ENCODE measurements at regions of chr20 and their contacts with region 1.

Region 1: GRCh38 chr20:46583411-46584214 is 33.2 kb upstream of the OCSTAMP start:
- DNase-seq: no peak
- ATAC-seq: no peak
- H3K4me3 ChIP-seq: no peak overlapping the region
- H3K27ac ChIP-seq: no peak overlapping the region
- H3K4me1 ChIP-seq: no peaks in the 10 kb centered on the region
- H3K27me3 ChIP-seq: no peaks in the 10 kb centered on the region
- CTCF ChIP-seq: no peak
- POLR2A ChIP-seq: no peak
- RAD21 ChIP-seq: no peak

Region 2: DNA sequence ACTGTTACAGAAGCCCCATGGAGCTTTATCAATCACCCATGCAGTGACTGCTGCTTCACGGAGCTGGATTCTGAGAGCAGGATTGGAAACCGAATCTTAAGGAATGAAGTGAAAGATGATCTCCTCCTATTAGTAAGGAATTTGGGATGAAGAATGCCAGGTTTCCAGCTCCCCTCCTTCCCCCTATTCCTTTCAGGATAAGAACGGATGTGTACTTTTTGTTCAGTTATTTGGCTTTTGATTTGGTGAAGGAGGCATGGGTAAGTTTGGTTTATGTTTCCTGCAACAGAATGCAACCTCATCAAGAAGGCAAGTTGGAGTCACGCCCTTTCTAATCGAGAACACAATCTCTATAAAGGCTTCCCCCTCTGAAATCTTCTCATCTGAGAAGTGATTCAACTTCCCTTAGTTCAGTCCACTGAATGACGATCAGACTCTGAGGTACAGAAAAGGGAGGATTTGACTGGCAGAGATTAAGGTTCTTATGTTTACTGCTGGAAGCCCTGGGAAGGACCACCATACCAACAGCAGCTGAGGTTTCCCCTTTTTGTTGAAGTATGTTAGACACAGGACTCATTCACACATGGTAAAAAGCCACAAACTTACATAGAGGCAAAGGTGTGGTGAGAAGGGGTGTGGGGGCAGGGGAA is 182.7 kb before region 1 on chr20:
- CTCF ChIA-PET with region 1: no interaction called
- POLR2A ChIA-PET with region 1: no interaction called
- RAD21 ChIA-PET with region 1: no interaction called
- intact Hi-C with region 1: no loop called
- DNase-seq: no peak
- ATAC-seq: no peak
- H3K4me3 ChIP-seq: no peak overlapping the region
- H3K27ac ChIP-seq: no peak overlapping the region
- H3K4me1 ChIP-seq: peaks cover 3 to 6% of the 10 kb centered on the region in 2 experiments; a peak in 3 of 4 replicates
- H3K27me3 ChIP-seq: no peaks in the 10 kb centered on the region
- CTCF ChIP-seq: no peak
- POLR2A ChIP-seq: no peak
- RAD21 ChIP-seq: no peak

Region 3: DNA sequence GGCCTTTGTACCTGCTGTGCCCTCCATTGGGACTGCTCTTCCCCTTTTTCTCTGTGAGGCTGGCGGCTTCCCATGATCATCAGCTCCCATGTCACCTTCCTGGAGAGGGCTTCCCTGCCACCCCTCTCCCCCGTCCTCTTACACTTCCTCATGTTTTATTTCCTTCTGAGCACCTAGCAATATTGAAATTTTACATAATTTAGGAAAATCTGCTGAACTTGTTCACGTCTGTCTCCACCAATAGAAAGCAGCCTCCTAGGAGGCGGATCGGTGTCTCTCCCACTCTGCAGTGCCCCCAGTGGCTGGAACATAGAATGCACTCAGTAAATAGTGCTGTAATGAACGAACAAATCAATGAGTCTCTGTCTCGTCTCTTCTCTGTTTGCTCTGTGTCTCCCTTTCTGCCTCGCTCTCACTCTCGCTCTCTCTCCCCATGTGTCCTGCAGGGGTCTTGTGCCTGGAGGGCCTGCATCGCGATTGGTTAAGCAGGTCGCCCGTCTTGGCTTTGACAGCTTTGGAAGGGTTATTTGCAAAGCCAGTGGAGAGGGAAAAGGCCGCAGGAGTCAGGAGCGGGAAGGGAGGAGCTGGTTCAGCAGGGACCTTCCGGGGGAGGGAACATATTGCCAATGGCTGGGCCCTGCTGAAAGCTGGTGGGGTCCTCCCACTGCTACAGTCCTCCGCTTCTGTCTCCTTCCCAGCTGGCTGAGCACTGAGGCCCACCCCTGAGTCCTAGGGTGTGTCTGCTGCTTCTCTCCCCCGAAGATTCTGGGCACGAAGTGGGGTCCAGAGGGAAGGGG is 21.0 kb before region 1 on chr20:
- CTCF ChIA-PET with region 1: interaction called, 12 read pairs
- POLR2A ChIA-PET with region 1: no interaction called
- RAD21 ChIA-PET with region 1: no interaction called
- intact Hi-C with region 1: no loop called
- DNase-seq: peak; percentile 47
- ATAC-seq: peak; percentile 93
- H3K4me3 ChIP-seq: peak overlapping the region; percentile 30 to 51
- H3K27ac ChIP-seq: no peak overlapping the region
- H3K4me1 ChIP-seq: peaks cover 4 to 14% of the 10 kb centered on the region in 2 experiments; a peak in 2 of 4 replicates
- H3K27me3 ChIP-seq: no peaks in the 10 kb centered on the region
- CTCF ChIP-seq: peak; percentile 33 to 95 (median 86); a peak in 4 of 6 replicates
- POLR2A ChIP-seq: no peak
- RAD21 ChIP-seq: no peak; the same call in 1 of the 2 replicates

Region 4: DNA sequence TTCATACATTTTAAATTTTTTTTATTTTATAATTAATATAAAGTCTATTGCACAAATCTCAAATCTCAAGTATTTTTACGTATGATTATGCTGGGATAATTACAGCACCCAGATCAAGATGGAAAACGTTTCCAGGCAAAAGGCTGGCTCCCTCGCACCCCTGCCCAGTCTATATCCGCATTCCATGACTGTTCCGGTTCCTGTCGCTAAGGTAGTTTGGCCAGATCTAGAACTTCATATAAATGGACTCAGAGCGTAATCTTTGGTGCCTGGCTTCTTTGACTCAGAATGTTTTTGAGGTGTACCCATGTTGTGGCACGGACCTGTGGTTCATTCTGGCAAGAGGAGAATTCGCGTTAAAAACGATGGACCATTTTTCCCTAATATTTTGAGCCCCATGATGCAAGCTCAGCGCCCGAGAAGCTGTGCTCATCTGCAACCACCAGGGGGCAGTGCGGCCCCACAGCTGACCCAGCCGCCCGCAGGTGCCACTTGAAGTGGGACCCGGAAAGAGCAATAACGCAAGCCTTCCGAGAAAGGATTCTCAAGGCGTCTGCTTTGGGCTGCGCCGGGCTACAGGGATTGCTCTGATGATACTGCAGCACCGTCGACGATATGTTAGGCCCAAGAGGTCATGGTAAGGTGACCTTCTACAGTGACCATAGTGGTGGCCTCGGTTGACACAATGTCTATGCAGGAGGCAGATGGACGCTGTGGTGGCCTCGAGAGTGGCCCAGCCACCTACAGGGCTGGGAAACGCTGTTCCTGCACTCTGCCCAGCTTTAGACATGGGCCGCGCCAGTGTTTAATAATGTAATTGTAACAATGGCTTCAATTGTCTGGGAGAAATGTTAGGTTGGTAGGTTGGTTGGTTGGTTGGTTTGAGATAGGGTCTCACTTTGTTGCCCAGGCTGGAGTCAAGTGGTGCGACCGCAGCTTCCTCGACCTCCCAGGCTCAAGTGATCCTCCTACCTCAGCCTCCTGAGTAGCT is 612.8 kb after region 1 on chr20:
- CTCF ChIA-PET with region 1: no interaction called
- POLR2A ChIA-PET with region 1: no interaction called
- RAD21 ChIA-PET with region 1: no interaction called
- intact Hi-C with region 1: no loop called
- DNase-seq: peak; percentile 62
- ATAC-seq: peak; percentile 75
- H3K4me3 ChIP-seq: no peak overlapping the region
- H3K27ac ChIP-seq: no peak overlapping the region
- H3K4me1 ChIP-seq: peaks cover 16 to 45% of the 10 kb centered on the region in 2 experiments
- H3K27me3 ChIP-seq: no peaks in the 10 kb centered on the region
- CTCF ChIP-seq: peak; percentile 92 to 98 (median 96)
- POLR2A ChIP-seq: no peak
- RAD21 ChIP-seq: peak; percentile 99